B cell (primary cell): ENCODE measurements at regions of chr20 and their contacts with region 1.

Region 1: DNA sequence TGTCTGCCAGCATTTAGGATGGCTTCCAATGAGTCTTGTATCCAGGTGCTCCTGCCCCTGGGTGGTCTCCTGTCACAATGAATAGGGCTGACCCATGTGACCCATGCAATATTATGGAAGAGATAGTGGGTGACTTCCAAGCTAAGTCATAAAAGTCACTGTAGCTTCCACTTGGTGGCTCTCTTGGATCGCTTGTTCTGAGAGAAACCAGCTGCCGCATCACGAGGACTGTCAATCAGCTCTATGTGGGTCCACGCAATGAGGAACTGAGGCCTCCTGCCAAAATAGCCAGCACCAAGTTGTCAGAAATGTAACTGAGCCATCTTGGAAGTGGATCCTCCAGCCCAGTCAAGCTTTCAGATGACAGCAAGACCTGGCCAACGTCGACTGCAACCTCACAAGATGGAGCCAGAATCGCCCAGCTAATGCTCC is 14.9 kb upstream of the MATN4 start:
- DNase-seq: peak; percentile 70
- ATAC-seq: peak; percentile 23
- H3K4me3 ChIP-seq: no peak overlapping the region
- H3K4me3 Mint-ChIP-seq: no peak overlapping the region
- H3K27ac ChIP-seq: no peak overlapping the region
- H3K27ac Mint-ChIP-seq: peak overlapping the region; percentile 15
- H3K4me1 ChIP-seq: peaks cover 28 to 41% of the 10 kb centered on the region in 2 donors
- H3K4me1 Mint-ChIP-seq: peaks cover 23% of the 10 kb centered on the region
- H3K27me3 ChIP-seq: peaks cover 0 to 3% (median 0%) of the 10 kb centered on the region in 4 experiments
- H3K27me3 Mint-ChIP-seq: no peaks in the 10 kb centered on the region
- CTCF ChIP-seq: no peak

Region 2: GRCh38 chr20:45293041-45294002 is 29.6 kb before region 1 on chr20:
- CTCF ChIA-PET with region 1: interaction called, 27 read pairs
- POLR2A ChIA-PET with region 1: no interaction called
- intact Hi-C with region 1: loop called (anchors 1 kb)
- DNase-seq: peak; percentile 85
- ATAC-seq: peak; percentile 86
- H3K4me3 ChIP-seq: peak overlapping the region in 4 of 5 experiments; percentile 39 to 65 (median 60)
- H3K4me3 Mint-ChIP-seq: peak overlapping the region; percentile 87
- H3K27ac ChIP-seq: no peak overlapping the region
- H3K27ac Mint-ChIP-seq: no peak overlapping the region
- H3K4me1 ChIP-seq: peaks cover 13 to 21% of the 10 kb centered on the region in 2 donors
- H3K4me1 Mint-ChIP-seq: peaks cover 18% of the 10 kb centered on the region
- H3K27me3 ChIP-seq: peaks cover 0 to 42% (median 20%) of the 10 kb centered on the region in 4 experiments
- H3K27me3 Mint-ChIP-seq: peaks cover 41% of the 10 kb centered on the region
- CTCF ChIP-seq: peak; percentile 96

Region 3: DNA sequence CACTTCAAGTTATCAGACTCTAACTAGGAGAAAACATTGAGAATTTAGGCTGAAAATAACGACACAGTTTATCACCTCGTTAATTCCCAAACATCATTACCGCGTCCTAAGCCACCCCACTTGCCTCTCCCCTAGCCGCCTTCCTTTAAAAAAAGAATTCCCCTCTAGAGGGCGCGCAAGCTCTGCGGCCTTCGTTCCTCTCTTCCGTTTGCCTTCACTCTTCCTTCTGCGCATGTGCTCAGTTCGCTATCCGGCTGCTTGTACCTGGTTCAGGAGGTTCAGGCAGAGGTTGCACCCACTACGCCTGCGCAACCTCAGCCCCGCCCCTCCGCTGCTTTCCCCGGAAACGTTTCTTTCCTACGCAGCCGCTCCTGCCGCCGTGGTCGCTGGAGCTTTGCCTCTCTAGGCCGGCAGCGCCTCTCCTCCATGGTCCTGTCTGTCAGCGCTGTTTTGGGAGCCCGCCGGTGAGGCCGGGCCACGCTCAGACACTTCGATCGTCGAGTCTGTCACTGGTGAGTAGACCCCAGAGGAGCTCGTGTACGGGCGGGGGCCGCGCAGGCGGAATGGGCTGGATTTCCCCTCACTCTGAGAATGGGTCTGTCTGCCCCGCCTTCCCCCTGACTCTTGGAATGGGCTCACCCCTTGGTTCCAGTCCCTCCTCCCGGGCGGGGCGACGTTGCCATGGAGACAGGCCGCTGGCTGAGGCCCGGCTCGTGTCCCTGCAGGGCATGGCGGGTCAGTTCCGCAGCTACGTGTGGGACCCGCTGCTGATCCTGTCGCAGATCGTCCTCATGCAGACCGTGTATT is 40.0 kb after region 1 on chr20 and contains the start of gene SYS1:
- CTCF ChIA-PET with region 1: interaction called, 15 read pairs
- POLR2A ChIA-PET with region 1: interaction called, 12 read pairs
- intact Hi-C with region 1: loop called (anchors 2 kb)
- DNase-seq: peak; percentile 99
- ATAC-seq: peak; percentile 82
- H3K4me3 ChIP-seq: peak within 1 kb of the TSS; percentile 79 to 88 (median 85)
- H3K4me3 Mint-ChIP-seq: peak within 1 kb of the TSS; percentile 99
- H3K27ac ChIP-seq: peak within 1 kb of the TSS; percentile 86 to 99
- H3K27ac Mint-ChIP-seq: peak within 1 kb of the TSS; percentile 99
- H3K4me1 ChIP-seq: peaks cover 47 to 49% of the 10 kb centered on the region in 2 donors
- H3K4me1 Mint-ChIP-seq: peaks cover 49% of the 10 kb centered on the region
- H3K27me3 ChIP-seq: peaks cover 0 to 5% (median 0%) of the 10 kb centered on the region in 4 experiments
- H3K27me3 Mint-ChIP-seq: no peaks in the 10 kb centered on the region
- CTCF ChIP-seq: peak; percentile 86
- total RNA-seq, gene SYS1: 57.7 and 61.4 TPM in 2 replicates

Region 4: DNA sequence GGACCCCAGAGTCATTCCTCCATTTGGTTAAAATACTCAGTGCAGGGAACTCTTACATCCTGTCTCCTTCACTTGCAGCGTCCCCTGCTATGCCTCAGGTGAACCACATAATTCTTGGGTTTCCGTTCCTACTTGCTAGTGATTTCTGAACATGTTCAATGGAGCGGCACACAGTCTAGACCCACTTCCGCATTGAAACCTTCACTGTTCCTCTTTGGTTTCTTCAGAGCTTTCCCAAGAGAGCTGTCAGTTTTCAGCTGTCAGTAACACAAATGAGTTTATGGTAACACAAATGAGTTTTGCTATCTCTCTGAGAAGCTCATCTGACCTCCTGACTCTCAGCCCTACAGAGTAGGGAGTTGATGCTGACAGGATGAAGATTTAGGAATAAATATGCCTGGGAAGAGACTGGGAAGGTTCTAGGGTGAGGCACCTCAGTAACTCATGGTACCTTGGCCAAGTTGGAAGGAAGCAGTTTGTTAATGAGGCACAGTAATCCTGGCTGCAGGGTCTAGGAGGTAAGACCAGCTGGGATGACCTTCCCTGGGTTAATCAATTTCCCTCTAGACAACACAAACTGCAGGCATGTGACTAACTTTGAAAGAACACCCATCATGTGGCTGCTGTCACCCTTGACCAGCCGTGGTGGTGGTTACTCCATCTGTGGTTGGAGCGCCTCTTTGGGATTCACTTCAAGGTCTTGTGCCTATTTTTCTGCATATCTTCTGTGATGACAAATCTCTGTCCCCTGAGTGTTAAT is 45.4 kb after region 1 on chr20:
- CTCF ChIA-PET with region 1: interaction called, 23 read pairs
- POLR2A ChIA-PET with region 1: interaction called, 12 read pairs
- intact Hi-C with region 1: loop called (anchors 2 kb)
- DNase-seq: peak; percentile 94
- ATAC-seq: peak; percentile 80
- H3K4me3 ChIP-seq: peak overlapping the region in 3 of 5 experiments; percentile 15 to 46 (median 18)
- H3K4me3 Mint-ChIP-seq: peak overlapping the region; percentile 86
- H3K27ac ChIP-seq: peak overlapping the region; percentile 43 to 94
- H3K27ac Mint-ChIP-seq: peak overlapping the region; percentile 92
- H3K4me1 ChIP-seq: peaks cover 95 to 98% of the 10 kb centered on the region in 2 donors
- H3K4me1 Mint-ChIP-seq: peaks cover 86% of the 10 kb centered on the region
- H3K27me3 ChIP-seq: no peaks in the 10 kb centered on the region
- H3K27me3 Mint-ChIP-seq: no peaks in the 10 kb centered on the region
- CTCF ChIP-seq: peak; percentile 28